Activated CD8-positive, alpha-beta T cell treated with anti-CD3 and anti-CD28 coated beads, Interleukin-2, amount 10 ng/mL, durations not matched to agents 7 days and 5 days (primary cell): ENCODE measurements at regions of chr9 and their contacts with region 1.

Region 1: DNA sequence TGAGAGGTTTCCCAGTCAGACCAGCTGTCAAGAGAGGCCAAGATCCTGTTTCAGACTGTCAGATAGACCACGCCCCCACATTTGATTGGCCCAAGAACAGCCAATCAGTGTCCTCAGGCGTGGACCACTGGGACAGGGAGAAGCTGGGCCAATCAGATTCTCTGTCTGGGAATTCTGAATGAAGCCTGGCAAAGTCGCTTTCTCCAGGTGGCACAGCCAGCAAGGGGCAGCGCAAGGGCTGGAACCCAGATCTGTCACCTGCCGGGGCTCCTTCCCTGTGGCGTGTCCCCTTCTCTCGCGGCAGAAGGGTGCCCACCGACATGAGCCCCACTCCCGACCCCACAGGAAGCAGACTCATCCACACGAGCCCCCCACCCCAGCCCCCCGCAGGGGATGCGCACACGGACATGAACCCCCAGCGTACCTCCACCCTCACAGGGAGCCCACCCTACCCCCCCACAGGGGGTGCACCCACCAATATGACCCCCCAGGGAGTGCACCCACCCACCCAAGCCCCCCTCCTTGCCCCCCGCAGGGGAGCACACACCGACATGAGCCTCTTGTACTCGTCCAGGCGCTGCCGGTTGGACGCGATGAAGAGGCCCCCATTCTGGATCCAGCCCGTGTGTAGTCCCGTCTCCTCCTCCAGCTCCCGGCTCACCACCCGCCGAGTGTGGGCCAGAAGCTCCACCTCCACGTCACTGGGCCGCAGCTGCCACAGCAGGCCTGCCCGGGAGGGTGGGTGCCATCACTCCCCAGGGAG is 6.1 kb downstream of the SARDH start:
- DNase-seq: no peak
- ATAC-seq: no peak
- H3K4me3 Mint-ChIP-seq: no peak overlapping the region
- H3K27ac Mint-ChIP-seq: no peak overlapping the region
- H3K4me1 Mint-ChIP-seq: peaks cover 1% of the 10 kb centered on the region
- H3K27me3 Mint-ChIP-seq: no peaks in the 10 kb centered on the region

Region 2: GRCh38 chr9:133522073-133523035 is 209.7 kb before region 1 on chr9:
- CTCF ChIA-PET with region 1: no interaction called
- POLR2A ChIA-PET with region 1: no interaction called
- DNase-seq: no peak
- ATAC-seq: no peak
- H3K4me3 Mint-ChIP-seq: no peak overlapping the region
- H3K27ac Mint-ChIP-seq: no peak overlapping the region
- H3K4me1 Mint-ChIP-seq: no peaks in the 10 kb centered on the region
- H3K27me3 Mint-ChIP-seq: no peaks in the 10 kb centered on the region

Region 3: GRCh38 chr9:133742849-133743444 is 10.9 kb after region 1 on chr9:
- CTCF ChIA-PET with region 1: interaction called, 18 read pairs
- POLR2A ChIA-PET with region 1: interaction called, 3 read pairs
- DNase-seq: peak; percentile 84
- ATAC-seq: peak; percentile 82
- H3K4me3 Mint-ChIP-seq: no peak overlapping the region
- H3K27ac Mint-ChIP-seq: no peak overlapping the region
- H3K4me1 Mint-ChIP-seq: peaks cover 11% of the 10 kb centered on the region
- H3K27me3 Mint-ChIP-seq: peaks cover 11% of the 10 kb centered on the region

Region 4: GRCh38 chr9:133759146-133759900 is 27.3 kb after region 1 on chr9:
- CTCF ChIA-PET with region 1: no interaction called
- POLR2A ChIA-PET with region 1: no interaction called
- DNase-seq: no peak
- ATAC-seq: no peak
- H3K4me3 Mint-ChIP-seq: no peak overlapping the region
- H3K27ac Mint-ChIP-seq: no peak overlapping the region
- H3K4me1 Mint-ChIP-seq: no peaks in the 10 kb centered on the region
- H3K27me3 Mint-ChIP-seq: peaks cover 9% of the 10 kb centered on the region